Naive thymus-derived CD4-positive, alpha-beta T cell (primary cell): ENCODE measurements at regions of chr20 and their contacts with region 1.

Region 1: GRCh38 chr20:63641792-63642544 is 11.3 kb downstream of the STMN3 start:
- DNase-seq: peak; percentile 94 to 98 (median 97)
- ATAC-seq: peak; percentile 86
- H3K4me3 ChIP-seq: peak overlapping the region; percentile 89
- H3K4me3 Mint-ChIP-seq: peak overlapping the region; percentile 57 to 92 (median 76)
- H3K27ac ChIP-seq: peak overlapping the region; percentile 90
- H3K27ac Mint-ChIP-seq: peak overlapping the region; percentile 66 to 98 (median 85)
- H3K4me1 ChIP-seq: peaks cover 23 to 24% of the 10 kb centered on the region in 2 donors
- H3K4me1 Mint-ChIP-seq: peaks cover 16 to 41% (median 28%) of the 10 kb centered on the region in 7 donors
- H3K27me3 ChIP-seq: no peaks in the 10 kb centered on the region
- H3K27me3 Mint-ChIP-seq: peaks cover 0 to 2% (median 0%) of the 10 kb centered on the region in 5 donors

Region 2: DNA sequence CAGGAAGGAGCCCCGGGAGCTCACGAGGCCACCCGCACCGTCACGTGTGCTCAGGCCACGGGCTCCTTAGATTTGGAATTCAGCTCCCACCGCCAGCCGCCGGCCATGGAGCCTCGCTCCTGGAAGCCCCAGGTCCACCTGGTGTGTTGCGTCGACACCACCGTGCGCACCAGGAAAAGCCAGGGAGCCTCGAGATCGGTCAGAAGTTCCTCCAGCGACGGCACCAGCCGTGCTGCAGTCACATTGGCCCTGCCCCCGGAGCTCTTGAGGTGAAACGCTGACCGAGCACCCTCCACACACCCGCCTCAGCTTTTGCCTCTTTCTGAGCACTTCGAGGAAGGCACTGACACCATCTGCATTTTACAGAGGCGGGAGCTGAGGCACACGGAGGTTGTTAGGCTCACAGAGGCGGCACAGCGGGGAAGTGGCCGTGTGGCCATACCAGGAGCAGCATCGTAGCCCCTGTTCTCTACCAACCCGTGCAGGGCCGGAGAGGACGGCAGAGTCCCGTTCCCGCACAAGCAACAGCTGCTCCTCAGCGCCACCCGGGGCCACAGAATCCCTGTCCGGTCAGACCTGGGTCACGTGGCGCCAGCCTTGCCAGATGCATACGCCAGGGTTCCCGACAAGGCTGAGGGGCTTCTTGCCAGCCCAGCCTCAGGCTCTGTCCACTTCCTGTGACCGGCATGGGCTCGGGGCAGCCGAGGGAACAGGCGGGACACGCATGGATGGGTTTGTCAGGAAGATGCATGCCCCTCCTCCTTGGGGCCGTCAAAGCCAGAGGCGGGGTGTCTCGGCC is 395.3 kb before region 1 on chr20:
- CTCF ChIA-PET with region 1: no interaction called
- POLR2A ChIA-PET with region 1: no interaction called
- intact Hi-C with region 1: no loop called
- DNase-seq: no peak
- ATAC-seq: no peak
- H3K4me3 ChIP-seq: no peak overlapping the region
- H3K4me3 Mint-ChIP-seq: no peak overlapping the region
- H3K27ac ChIP-seq: no peak overlapping the region
- H3K27ac Mint-ChIP-seq: no peak overlapping the region
- H3K4me1 ChIP-seq: no peaks in the 10 kb centered on the region
- H3K4me1 Mint-ChIP-seq: no peaks in the 10 kb centered on the region
- H3K27me3 ChIP-seq: no peaks in the 10 kb centered on the region
- H3K27me3 Mint-ChIP-seq: peaks cover 11 to 35% (median 22%) of the 10 kb centered on the region in 5 donors

Region 3: DNA sequence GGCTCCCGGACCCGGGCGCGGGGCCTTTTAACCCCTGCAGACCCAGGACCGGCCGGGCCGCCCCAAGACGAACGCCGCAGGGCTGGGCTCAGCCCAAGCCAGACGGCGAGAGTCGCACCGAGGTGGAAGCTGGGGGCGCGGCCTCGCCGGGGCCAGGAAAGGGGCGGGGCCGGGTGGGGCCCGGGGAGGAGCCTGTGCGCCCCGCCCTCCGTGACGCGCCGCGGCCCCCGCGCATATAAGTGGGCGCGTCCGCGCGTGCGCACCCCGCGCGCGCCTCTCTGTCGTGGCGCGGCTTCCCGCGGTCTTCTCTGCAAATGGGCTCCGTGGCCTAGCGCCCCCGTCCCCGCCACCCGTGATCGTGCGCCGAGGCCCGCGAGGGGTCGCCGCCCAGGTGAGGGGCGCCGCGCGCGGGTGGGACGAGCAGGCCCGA is 121.4 kb before region 1 on chr20 and contains the start of gene PPDPF:
- CTCF ChIA-PET with region 1: no interaction called
- POLR2A ChIA-PET with region 1: interaction called, 16 read pairs
- intact Hi-C with region 1: loop called (anchors 1 to 5 kb)
- DNase-seq: peak; percentile 76 to 92 (median 84)
- ATAC-seq: peak; percentile 96
- H3K4me3 ChIP-seq: peak within 1 kb of the TSS; percentile 86
- H3K4me3 Mint-ChIP-seq: peak within 1 kb of the TSS; percentile 65 to 89 (median 81)
- H3K27ac ChIP-seq: peak within 1 kb of the TSS; percentile 88
- H3K27ac Mint-ChIP-seq: peak within 1 kb of the TSS in 7 of 9 donors; percentile 51 to 88 (median 79)
- H3K4me1 ChIP-seq: peaks cover 11 to 14% of the 10 kb centered on the region in 2 donors
- H3K4me1 Mint-ChIP-seq: peaks cover 4 to 22% (median 9%) of the 10 kb centered on the region in 7 donors
- H3K27me3 ChIP-seq: no peaks in the 10 kb centered on the region
- H3K27me3 Mint-ChIP-seq: peaks cover 0 to 7% (median 0%) of the 10 kb centered on the region in 5 donors
- total RNA-seq, gene PPDPF: 138 to 225 (median 184) TPM

Region 4: GRCh38 chr20:63612276-63612928 is 29.6 kb before region 1 on chr20:
- CTCF ChIA-PET with region 1: interaction called, 9 read pairs
- POLR2A ChIA-PET with region 1: interaction called, 18 read pairs
- intact Hi-C with region 1: loop called in 1 of 2 experiments (anchors 1 kb)
- DNase-seq: no peak
- ATAC-seq: peak; percentile 84
- H3K4me3 ChIP-seq: no peak overlapping the region
- H3K4me3 Mint-ChIP-seq: no peak overlapping the region
- H3K27ac ChIP-seq: no peak overlapping the region
- H3K27ac Mint-ChIP-seq: no peak overlapping the region
- H3K4me1 ChIP-seq: no peaks in the 10 kb centered on the region
- H3K4me1 Mint-ChIP-seq: peaks cover 0 to 20% (median 11%) of the 10 kb centered on the region in 7 donors
- H3K27me3 ChIP-seq: no peaks in the 10 kb centered on the region
- H3K27me3 Mint-ChIP-seq: no peaks in the 10 kb centered on the region

Region 5: DNA sequence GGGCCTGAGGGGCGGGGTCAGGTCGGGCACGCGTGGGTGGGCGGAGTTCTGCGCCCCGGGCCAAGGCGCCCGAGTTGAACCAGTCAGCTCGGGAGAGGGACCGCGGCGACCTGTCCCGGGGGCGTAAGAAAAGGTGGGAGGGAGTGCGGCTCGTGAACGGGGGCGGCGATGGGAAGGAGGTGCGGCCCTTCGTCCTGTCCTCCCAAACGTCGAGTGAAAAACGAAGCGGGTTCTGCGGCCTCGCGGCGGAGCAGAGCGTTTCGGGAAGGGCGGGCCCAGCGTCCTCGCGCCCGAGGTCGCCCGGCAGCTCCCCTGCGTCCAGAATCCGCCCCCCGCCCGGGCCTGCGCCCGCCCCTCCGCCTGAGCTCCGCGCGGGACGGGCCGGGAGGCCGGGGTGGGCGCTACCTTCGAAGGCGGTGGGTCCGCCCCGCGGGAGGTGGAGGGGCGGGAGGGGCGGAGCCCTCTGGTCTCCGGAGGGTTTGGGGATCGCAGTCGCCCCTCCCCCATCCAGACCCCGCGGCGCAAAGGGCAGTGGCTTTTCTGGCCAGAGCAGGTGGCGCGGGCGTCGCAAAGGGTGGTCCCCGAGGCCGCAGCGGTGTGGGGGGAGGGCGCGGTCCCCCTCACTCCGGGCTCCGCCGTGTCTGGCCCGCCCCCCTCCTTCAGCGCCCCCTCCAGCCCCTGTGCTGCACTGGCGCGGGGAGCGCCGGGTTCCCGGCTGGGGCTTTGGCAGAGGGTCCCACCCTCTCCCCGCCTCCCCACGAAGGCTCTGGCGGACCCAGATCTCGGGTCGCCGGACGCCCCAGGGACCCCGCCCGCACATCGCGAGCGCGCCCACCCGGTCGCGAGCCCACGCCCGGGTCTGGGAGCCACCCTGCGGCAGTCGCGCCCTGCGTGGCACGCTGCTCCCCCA is 10.5 kb after region 1 on chr20:
- CTCF ChIA-PET with region 1: interaction called, 3 read pairs
- POLR2A ChIA-PET with region 1: interaction called, 53 read pairs
- intact Hi-C with region 1: loop called in 1 of 2 experiments (anchors 1 kb)
- DNase-seq: peak in 7 of 9 donors; percentile 37 to 56 (median 47)
- ATAC-seq: peak; percentile 60
- H3K4me3 ChIP-seq: peak overlapping the region; percentile 70
- H3K4me3 Mint-ChIP-seq: peak overlapping the region; percentile 65 to 96 (median 92)
- H3K27ac ChIP-seq: peak overlapping the region; percentile 60
- H3K27ac Mint-ChIP-seq: peak overlapping the region in 4 of 9 donors; percentile 32 to 94 (median 58)
- H3K4me1 ChIP-seq: peaks cover 10 to 21% of the 10 kb centered on the region in 2 donors
- H3K4me1 Mint-ChIP-seq: peaks cover 17 to 39% (median 28%) of the 10 kb centered on the region in 7 donors
- H3K27me3 ChIP-seq: no peaks in the 10 kb centered on the region
- H3K27me3 Mint-ChIP-seq: peaks cover 0 to 16% (median 0%) of the 10 kb centered on the region in 5 donors

Region 6: GRCh38 chr20:63791497-63792156 is 149.7 kb after region 1 on chr20:
- CTCF ChIA-PET with region 1: no interaction called
- POLR2A ChIA-PET with region 1: no interaction called
- intact Hi-C with region 1: loop called in 1 of 2 experiments (anchors 1 kb)
- DNase-seq: no peak
- ATAC-seq: no peak
- H3K4me3 ChIP-seq: no peak overlapping the region
- H3K4me3 Mint-ChIP-seq: no peak overlapping the region
- H3K27ac ChIP-seq: no peak overlapping the region
- H3K27ac Mint-ChIP-seq: no peak overlapping the region
- H3K4me1 ChIP-seq: no peaks in the 10 kb centered on the region
- H3K4me1 Mint-ChIP-seq: peaks cover 0 to 7% (median 2%) of the 10 kb centered on the region in 7 donors
- H3K27me3 ChIP-seq: no peaks in the 10 kb centered on the region
- H3K27me3 Mint-ChIP-seq: peaks cover 0 to 18% (median 0%) of the 10 kb centered on the region in 5 donors